Activated naive CD4-positive, alpha-beta T cell treated with anti-CD3 and anti-CD28 coated beads for 36 hours (primary cell): ENCODE measurements at regions of chr2 and their contacts with region 1.

Region 1: GRCh38 chr2:219177552-219178376 is at the start of gene RETREG2:
- DNase-seq: peak; percentile 78
- H3K4me3 Mint-ChIP-seq: peak within 1 kb of the TSS; percentile 94
- H3K27ac Mint-ChIP-seq: peak within 1 kb of the TSS; percentile 98
- H3K4me1 Mint-ChIP-seq: peaks cover 58% of the 10 kb centered on the region
- H3K27me3 Mint-ChIP-seq: no peaks in the 10 kb centered on the region
- total RNA-seq, gene RETREG2: 44.0 to 44.1 TPM

Region 2: GRCh38 chr2:218568190-218569037 is 609.4 kb before region 1 on chr2 and contains the starts of genes CNOT9 and USP37:
- CTCF ChIA-PET with region 1: no interaction called
- intact Hi-C with region 1: loop called (anchors 2 kb)
- DNase-seq: peak; percentile 100
- H3K4me3 Mint-ChIP-seq: peak within 1 kb of the TSS; percentile 91
- H3K27ac Mint-ChIP-seq: peak within 1 kb of the TSS; percentile 100
- H3K4me1 Mint-ChIP-seq: peaks cover 60% of the 10 kb centered on the region
- H3K27me3 Mint-ChIP-seq: no peaks in the 10 kb centered on the region
- total RNA-seq, gene CNOT9: 74.3 to 78.6 TPM
- total RNA-seq, gene USP37: 21.7 to 23.2 TPM

Region 3: GRCh38 chr2:218876562-218877219 is 301.1 kb before region 1 on chr2:
- CTCF ChIA-PET with region 1: no interaction called
- intact Hi-C with region 1: loop called (anchors 5 kb)
- DNase-seq: peak; percentile 86
- H3K4me3 Mint-ChIP-seq: no peak overlapping the region
- H3K27ac Mint-ChIP-seq: no peak overlapping the region
- H3K4me1 Mint-ChIP-seq: peaks cover 39% of the 10 kb centered on the region
- H3K27me3 Mint-ChIP-seq: peaks cover 41% of the 10 kb centered on the region

Region 4: DNA sequence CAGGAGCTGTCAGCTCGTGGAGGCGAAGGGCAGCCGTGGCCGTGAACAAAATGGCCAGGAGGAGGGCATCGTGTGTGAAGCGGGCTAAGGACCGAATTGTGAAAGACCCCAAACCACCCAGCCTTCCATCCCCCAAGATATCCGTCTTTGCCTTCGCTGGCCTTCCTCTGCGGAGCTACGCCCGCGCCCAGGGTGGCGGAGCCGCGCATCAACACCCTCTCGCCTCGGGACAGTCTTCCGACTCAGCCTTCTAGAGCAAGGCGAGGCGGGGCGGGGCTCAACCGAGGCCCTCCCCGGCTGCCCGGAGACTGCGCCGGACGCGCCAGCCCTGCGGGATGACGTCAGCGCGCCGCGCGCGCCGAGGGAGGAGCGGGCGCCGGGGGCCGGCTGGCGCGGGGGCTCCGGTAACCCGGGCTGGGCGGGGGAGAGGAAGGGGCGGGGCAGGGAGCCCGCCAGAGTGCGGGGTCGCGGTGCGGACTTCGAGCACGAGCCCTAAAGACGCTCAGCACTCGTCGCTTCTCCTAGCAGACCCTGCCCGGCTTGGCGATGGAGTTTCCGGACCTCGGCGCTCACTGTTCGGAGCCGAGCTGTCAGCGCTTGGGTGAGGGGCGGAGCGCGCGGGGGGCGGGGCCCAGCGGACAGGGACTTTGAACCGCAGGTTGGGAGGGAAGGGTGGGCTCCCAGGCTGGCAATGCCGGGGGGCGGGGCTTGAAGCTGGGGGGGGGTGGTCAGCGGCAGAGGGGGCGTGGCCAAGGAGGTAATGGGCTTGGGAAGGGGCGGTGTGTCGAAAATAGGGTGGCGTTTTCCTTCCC is 28.9 kb after region 1 on chr2 and contains the start of gene ZFAND2B:
- CTCF ChIA-PET with region 1: interaction called, 15 read pairs
- intact Hi-C with region 1: loop called (anchors 1 kb)
- DNase-seq: peak; percentile 94
- H3K4me3 Mint-ChIP-seq: peak within 1 kb of the TSS; percentile 94
- H3K27ac Mint-ChIP-seq: peak within 1 kb of the TSS; percentile 96
- H3K4me1 Mint-ChIP-seq: peaks cover 32% of the 10 kb centered on the region
- H3K27me3 Mint-ChIP-seq: no peaks in the 10 kb centered on the region
- total RNA-seq, gene ZFAND2B: 32.6 to 33.6 TPM

Region 5: DNA sequence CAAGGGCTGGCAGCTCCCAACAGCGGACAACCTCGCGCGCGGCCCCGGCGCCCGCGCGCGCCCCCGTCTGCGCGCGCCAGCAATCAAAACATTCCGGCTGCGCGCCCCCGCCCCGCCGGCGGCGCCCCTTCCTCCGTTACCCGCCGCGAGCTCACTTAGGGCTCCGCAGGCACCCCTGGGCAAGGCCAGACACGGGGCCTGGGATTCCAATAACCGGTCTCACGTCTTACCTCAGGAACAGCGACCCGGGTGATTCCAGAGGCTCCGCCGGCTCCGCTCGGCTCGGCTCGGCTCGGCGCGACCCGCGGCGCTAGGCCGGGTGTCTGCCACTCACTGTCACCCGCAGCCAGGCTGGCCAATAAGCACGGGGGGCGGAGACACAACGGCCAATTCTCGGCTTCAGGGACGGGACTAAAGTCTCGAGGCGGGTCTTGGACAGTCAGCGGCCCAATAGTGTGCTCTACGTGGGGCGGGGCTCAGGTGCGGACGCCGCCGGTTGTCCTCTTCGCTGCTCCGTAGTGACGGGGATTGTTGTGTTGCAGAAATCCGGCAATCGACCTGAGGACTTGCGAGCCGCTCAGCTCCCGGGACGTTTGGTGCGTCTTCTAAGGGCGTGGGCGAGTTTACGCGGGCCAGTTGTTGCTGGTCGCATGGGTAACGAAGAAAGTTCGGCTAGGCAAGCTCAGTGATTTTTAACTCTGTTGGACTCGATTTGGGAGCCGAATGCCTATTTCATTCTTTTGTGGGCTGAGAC is 51.7 kb after region 1 on chr2 and contains the starts of genes ANKZF1 and ATG9A:
- CTCF ChIA-PET with region 1: interaction called, 3 read pairs
- intact Hi-C with region 1: loop called (anchors 1 kb)
- DNase-seq: peak; percentile 99
- H3K4me3 Mint-ChIP-seq: peak within 1 kb of the TSS; percentile 96
- H3K27ac Mint-ChIP-seq: peak within 1 kb of the TSS; percentile 97
- H3K4me1 Mint-ChIP-seq: peaks cover 48% of the 10 kb centered on the region
- H3K27me3 Mint-ChIP-seq: no peaks in the 10 kb centered on the region
- total RNA-seq, gene ANKZF1: 87.7 to 88.5 TPM
- total RNA-seq, gene ATG9A: 26.0 to 27.7 TPM

Region 6: DNA sequence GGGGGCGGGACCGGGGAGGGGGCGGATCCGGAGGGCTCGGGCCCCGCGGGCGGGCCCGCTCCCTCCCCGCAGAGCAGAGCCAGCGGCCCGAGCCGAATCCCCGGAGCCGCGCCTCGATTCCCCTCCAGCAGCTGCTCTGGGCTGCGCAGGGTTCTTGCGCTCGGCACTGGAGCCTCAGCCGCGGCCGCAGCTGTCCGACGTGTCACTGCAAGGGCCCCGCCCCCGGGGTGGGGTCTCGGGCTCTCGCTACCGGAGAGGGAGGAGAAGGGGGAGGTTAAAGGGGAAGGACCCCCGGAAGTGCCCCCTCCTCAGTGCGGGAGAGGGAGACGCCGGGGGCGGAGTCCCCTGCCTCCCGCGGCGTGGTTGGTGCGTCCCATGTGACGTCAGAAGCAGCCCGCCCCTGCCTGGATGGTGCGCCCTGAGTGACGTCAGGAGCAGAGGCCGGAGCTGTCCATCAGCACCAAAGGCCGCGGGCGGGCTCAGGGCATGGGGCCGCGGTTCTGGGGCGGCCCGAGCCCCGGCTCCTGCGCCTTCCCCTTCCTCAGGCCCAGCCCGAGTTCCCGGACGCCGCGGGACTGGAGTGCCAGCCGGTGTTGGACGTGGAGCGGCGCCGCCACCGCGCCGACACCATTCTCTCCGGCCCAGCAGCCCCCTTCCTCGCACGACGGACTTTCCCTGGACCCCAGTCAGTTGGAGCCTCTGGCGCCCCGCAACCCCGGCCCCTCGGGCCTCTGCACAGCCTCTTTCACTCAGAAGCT is 366.0 kb after region 1 on chr2 and contains the starts of genes CHPF and TMEM198:
- CTCF ChIA-PET with region 1: no interaction called
- intact Hi-C with region 1: loop called (anchors 5 kb)
- DNase-seq: peak; percentile 97
- H3K4me3 Mint-ChIP-seq: peak within 1 kb of the TSS; percentile 79
- H3K27ac Mint-ChIP-seq: no peak within 1 kb of the TSS
- H3K4me1 Mint-ChIP-seq: peaks cover 20% of the 10 kb centered on the region
- H3K27me3 Mint-ChIP-seq: peaks cover 8% of the 10 kb centered on the region
- total RNA-seq, gene CHPF: 8.5 to 9.0 TPM
- total RNA-seq, gene TMEM198: 0.86 to 1.1 TPM

Region 7: GRCh38 chr2:219823574-219823973 is 645.8 kb after region 1 on chr2:
- CTCF ChIA-PET with region 1: no interaction called
- intact Hi-C with region 1: no loop called
- DNase-seq: no peak
- H3K4me3 Mint-ChIP-seq: no peak overlapping the region
- H3K27ac Mint-ChIP-seq: no peak overlapping the region
- H3K4me1 Mint-ChIP-seq: no peaks in the 10 kb centered on the region
- H3K27me3 Mint-ChIP-seq: peaks cover 5% of the 10 kb centered on the region